GM12878 (cell line): ENCODE measurements at regions of chr1 and their contacts with region 1.

Region 1: GRCh38 chr1:170692866-170693575 is 29.1 kb downstream of the PRRX1 start:
- DNase-seq: no peak
- ATAC-seq: no peak
- H3K4me3 ChIP-seq: no peak overlapping the region
- H3K27ac ChIP-seq: no peak overlapping the region
- H3K4me1 ChIP-seq: no peaks in the 10 kb centered on the region
- H3K27me3 ChIP-seq: no peaks in the 10 kb centered on the region
- CTCF ChIP-seq: no peak
- EP300 ChIP-seq: no peak
- POLR2A ChIP-seq: no peak
- RAD21 ChIP-seq: no peak

Region 2: DNA sequence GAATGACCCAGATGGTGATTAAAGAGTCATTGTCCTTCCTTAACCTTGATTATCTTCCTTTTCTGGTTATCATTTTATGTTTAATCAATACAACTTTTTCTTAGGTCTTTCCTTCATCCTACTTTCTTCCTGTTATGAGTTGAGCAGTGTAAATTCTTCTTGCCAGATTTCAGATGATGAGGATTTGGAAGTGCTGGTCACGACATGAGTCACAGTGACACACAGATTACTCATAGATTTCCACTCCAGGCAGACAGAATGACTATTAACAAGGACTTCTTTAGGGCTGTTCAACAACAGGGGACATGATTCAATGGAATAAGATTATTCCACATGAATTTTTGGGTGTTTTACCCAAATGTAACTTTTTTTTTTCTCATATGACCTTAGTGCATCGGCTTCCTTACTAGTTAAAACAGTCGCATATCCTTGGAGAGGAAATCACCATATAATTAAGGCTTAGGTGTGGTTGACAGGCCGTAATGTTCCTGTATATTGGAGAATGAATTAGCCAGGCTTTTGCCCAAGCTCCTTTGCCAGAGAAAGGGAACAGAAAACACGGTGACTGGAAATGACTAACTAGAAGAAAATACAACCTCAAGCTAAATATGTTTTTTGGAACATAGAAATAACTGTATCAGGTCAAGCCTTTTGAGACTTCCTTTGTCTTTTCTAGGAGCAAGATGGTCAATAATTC is 15.1 kb after region 1 on chr1:
- CTCF ChIA-PET with region 1: interaction called, 53 read pairs
- POLR2A ChIA-PET with region 1: interaction called, 6 read pairs
- RAD21 ChIA-PET with region 1: interaction called, 8 read pairs
- SMC1A ChIA-PET with region 1: interaction called, 15 read pairs
- in situ Hi-C with region 1: no loop called
- intact Hi-C with region 1: no loop called
- DNase-seq: no peak
- ATAC-seq: no peak
- H3K4me3 ChIP-seq: no peak overlapping the region
- H3K27ac ChIP-seq: no peak overlapping the region
- H3K4me1 ChIP-seq: no peaks in the 10 kb centered on the region
- H3K27me3 ChIP-seq: no peaks in the 10 kb centered on the region
- CTCF ChIP-seq: no peak
- EP300 ChIP-seq: no peak
- POLR2A ChIP-seq: no peak
- RAD21 ChIP-seq: no peak

Region 3: GRCh38 chr1:170714163-170714562 is 21.1 kb after region 1 on chr1:
- CTCF ChIA-PET with region 1: interaction called, 53 read pairs
- POLR2A ChIA-PET with region 1: interaction called, 3 read pairs
- RAD21 ChIA-PET with region 1: interaction called, 8 read pairs
- SMC1A ChIA-PET with region 1: interaction called, 15 read pairs
- in situ Hi-C with region 1: no loop called
- intact Hi-C with region 1: no loop called
- DNase-seq: no peak
- ATAC-seq: no peak
- H3K4me3 ChIP-seq: no peak overlapping the region
- H3K27ac ChIP-seq: no peak overlapping the region
- H3K4me1 ChIP-seq: no peaks in the 10 kb centered on the region
- H3K27me3 ChIP-seq: 0 out of 4 replicates have a peak, but pooled peaks cover 0 to 2% of the 10 kb centered on the region in 2 experiments
- CTCF ChIP-seq: no peak
- EP300 ChIP-seq: no peak
- POLR2A ChIP-seq: no peak
- RAD21 ChIP-seq: no peak

Region 4: DNA sequence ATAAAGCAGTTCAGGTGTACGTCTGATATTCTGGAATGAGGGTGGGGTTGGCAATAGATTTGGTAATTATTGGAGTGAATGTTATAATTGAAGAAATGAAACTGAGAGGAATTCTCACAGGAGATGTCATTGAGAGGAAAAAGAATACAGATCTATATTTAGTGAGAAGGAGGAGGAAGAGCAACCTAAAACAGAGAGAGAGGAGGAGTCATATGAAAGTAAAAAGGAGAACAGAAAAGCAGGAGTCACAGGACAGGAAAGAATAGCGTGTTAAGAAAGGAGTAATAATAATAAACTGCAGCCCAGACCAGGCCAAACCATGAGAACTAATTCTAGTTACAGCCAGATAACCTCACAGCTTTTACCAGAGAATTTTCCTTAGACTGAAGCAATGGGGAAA is 179.6 kb after region 1 on chr1:
- CTCF ChIA-PET with region 1: interaction called, 13 read pairs
- POLR2A ChIA-PET with region 1: no interaction called
- RAD21 ChIA-PET with region 1: interaction called, 5 read pairs
- SMC1A ChIA-PET with region 1: interaction called, 8 read pairs
- in situ Hi-C with region 1: no loop called
- intact Hi-C with region 1: no loop called
- DNase-seq: peak; percentile 30
- ATAC-seq: peak; percentile 88
- H3K4me3 ChIP-seq: no peak overlapping the region
- H3K27ac ChIP-seq: peak overlapping the region; percentile 46; the same call in 1 of the 2 replicates
- H3K4me1 ChIP-seq: peaks cover 7% of the 10 kb centered on the region
- H3K27me3 ChIP-seq: no peaks in the 10 kb centered on the region
- CTCF ChIP-seq: no peak
- EP300 ChIP-seq: peak; percentile 45 to 60; a peak in 3 of 4 replicates
- POLR2A ChIP-seq: no peak
- RAD21 ChIP-seq: no peak